Naive thymus-derived CD8-positive, alpha-beta T cell (primary cell): ENCODE measurements at regions of chr1 and their contacts with region 1.

Region 1: GRCh38 chr1:54488779-54489626 is 59.0 kb upstream of the ACOT11 start:
- DNase-seq: peak; percentile 40 to 88 (median 73)
- ATAC-seq: peak; percentile 68 to 69
- H3K4me3 Mint-ChIP-seq: peak overlapping the region; percentile 80 to 91 (median 88)
- H3K27ac Mint-ChIP-seq: peak overlapping the region; percentile 33 to 92 (median 84)
- H3K4me1 Mint-ChIP-seq: peaks cover 26 to 53% (median 46%) of the 10 kb centered on the region in 4 donors
- H3K27me3 Mint-ChIP-seq: peaks cover 0 to 18% (median 3%) of the 10 kb centered on the region in 5 donors

Region 2: GRCh38 chr1:54406339-54407153 is 82.5 kb before region 1 on chr1 and contains the start of gene SSBP3:
- POLR2A ChIA-PET with region 1: interaction called, 110 read pairs
- DNase-seq: peak; percentile 86 to 94 (median 91)
- ATAC-seq: peak; percentile 92
- H3K4me3 Mint-ChIP-seq: peak within 1 kb of the TSS; percentile 88 to 99 (median 94)
- H3K27ac Mint-ChIP-seq: peak within 1 kb of the TSS; percentile 88 to 97 (median 95)
- H3K4me1 Mint-ChIP-seq: peaks cover 38 to 67% (median 62%) of the 10 kb centered on the region in 4 donors
- H3K27me3 Mint-ChIP-seq: no peaks in the 10 kb centered on the region
- polyA plus RNA-seq, gene SSBP3: 16.1 to 19.8 (median 16.7) TPM

Region 3: GRCh38 chr1:54413295-54413694 is 75.7 kb before region 1 on chr1:
- POLR2A ChIA-PET with region 1: interaction called, 10 read pairs
- DNase-seq: peak in 4 of 10 donors; percentile 10 to 35 (median 22)
- ATAC-seq: peak; percentile 77 to 79
- H3K4me3 Mint-ChIP-seq: peak overlapping the region in 8 of 10 donors; percentile 8 to 80 (median 38)
- H3K27ac Mint-ChIP-seq: peak overlapping the region in 9 of 10 donors; percentile 25 to 91 (median 48)
- H3K4me1 Mint-ChIP-seq: peaks cover 34 to 46% (median 42%) of the 10 kb centered on the region in 4 donors
- H3K27me3 Mint-ChIP-seq: peaks cover 0 to 5% (median 0%) of the 10 kb centered on the region in 5 donors

Region 4: GRCh38 chr1:54474639-54475251 is 14.3 kb before region 1 on chr1:
- POLR2A ChIA-PET with region 1: interaction called, 21 read pairs
- DNase-seq: peak in 6 of 10 donors; percentile 25 to 70 (median 38)
- ATAC-seq: peak; percentile 64
- H3K4me3 Mint-ChIP-seq: peak overlapping the region; percentile 76 to 91 (median 86)
- H3K27ac Mint-ChIP-seq: peak overlapping the region; percentile 86 to 97 (median 94)
- H3K4me1 Mint-ChIP-seq: peaks cover 21 to 61% (median 54%) of the 10 kb centered on the region in 4 donors
- H3K27me3 Mint-ChIP-seq: peaks cover 0 to 6% (median 0%) of the 10 kb centered on the region in 5 donors